ENCODE measurements at regions of chr9 and their contacts with region 1.

Region 1: GRCh38 chr9:126425869-126426268 is 99.2 kb downstream of the MVB12B start:
- DNase-seq: no peak
- H3K4me3 ChIP-seq: no peak overlapping the region
- H3K27ac ChIP-seq: no peak overlapping the region
- H3K4me1 ChIP-seq: no peaks in the 10 kb centered on the region
- H3K27me3 ChIP-seq: no peaks in the 10 kb centered on the region
- CTCF ChIP-seq: no peak
- POLR2A ChIP-seq: no peak

Region 2: GRCh38 chr9:126440940-126441339 is 15.1 kb after region 1 on chr9:
- CTCF ChIA-PET with region 1: interaction called, 14 read pairs
- POLR2A ChIA-PET with region 1: no interaction called
- dilution Hi-C with region 1: no loop called
- intact Hi-C with region 1: no loop called
- DNase-seq: no peak
- H3K4me3 ChIP-seq: no peak overlapping the region
- H3K27ac ChIP-seq: no peak overlapping the region
- H3K4me1 ChIP-seq: no peaks in the 10 kb centered on the region
- H3K27me3 ChIP-seq: no peaks in the 10 kb centered on the region
- CTCF ChIP-seq: no peak
- POLR2A ChIP-seq: no peak

Region 3: GRCh38 chr9:126532019-126532462 is 106.2 kb after region 1 on chr9:
- CTCF ChIA-PET with region 1: no interaction called
- POLR2A ChIA-PET with region 1: no interaction called
- dilution Hi-C with region 1: no loop called
- intact Hi-C with region 1: no loop called
- DNase-seq: no peak
- H3K4me3 ChIP-seq: no peak overlapping the region
- H3K27ac ChIP-seq: no peak overlapping the region
- H3K4me1 ChIP-seq: no peaks in the 10 kb centered on the region
- H3K27me3 ChIP-seq: peaks cover 25 to 37% of the 10 kb centered on the region in 2 experiments
- CTCF ChIP-seq: no peak
- POLR2A ChIP-seq: no peak

Measured in endothelial cell of umbilical vein (primary cell).